ENCODE measurements at regions of chr15 and their contacts with region 1.

Region 1: GRCh38 chr15:72585476-72586082 is 68.9 kb upstream of the GOLGA6B start:
- H3K4me3 Mint-ChIP-seq: no peak overlapping the region
- H3K27ac Mint-ChIP-seq: no peak overlapping the region
- H3K4me1 Mint-ChIP-seq: peaks cover 5% of the 10 kb centered on the region
- H3K27me3 Mint-ChIP-seq: no peaks in the 10 kb centered on the region

Region 2: DNA sequence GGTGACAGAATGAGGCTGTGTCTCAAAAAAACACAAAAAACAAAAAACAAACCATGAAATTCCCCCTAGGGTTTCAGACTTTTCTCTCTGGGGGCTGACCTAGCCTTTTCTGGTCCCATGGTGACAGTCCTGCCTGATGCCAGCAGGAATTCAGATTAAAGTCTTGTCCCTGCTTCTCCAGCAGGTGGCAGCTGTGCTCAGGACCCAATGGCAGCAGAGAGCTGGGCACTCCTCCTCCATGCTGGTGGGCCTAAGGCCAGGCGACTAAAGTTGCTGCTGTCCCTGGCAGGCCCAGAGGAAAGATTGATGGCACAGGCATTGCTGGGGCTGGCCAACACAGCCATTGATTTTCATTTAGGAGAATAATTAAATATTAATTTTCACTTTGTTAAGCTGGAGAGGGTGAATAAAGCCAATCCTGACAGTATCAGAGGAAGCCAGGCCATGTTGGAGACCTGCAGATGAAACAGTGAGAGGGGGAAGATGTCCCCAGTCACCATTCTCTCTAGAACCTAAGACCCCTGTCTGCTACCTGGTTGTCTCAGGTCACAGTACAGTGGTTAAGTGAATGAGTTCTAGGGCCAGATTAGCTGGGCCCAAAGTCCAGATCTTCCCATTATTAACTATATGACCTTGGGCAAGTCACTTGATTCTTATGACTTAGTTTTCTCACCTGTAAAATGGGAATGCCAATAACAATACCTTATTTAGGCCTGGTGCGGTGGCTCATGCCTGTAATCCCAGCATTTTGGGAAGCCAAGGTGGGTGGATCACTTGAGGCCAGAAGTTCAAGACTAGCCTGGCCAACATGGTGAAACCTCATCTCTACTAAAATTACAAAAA is 272.8 kb before region 1 on chr15:
- intact Hi-C with region 1: loop called (anchors 10 kb)
- H3K4me3 Mint-ChIP-seq: no peak overlapping the region
- H3K27ac Mint-ChIP-seq: no peak overlapping the region
- H3K4me1 Mint-ChIP-seq: peaks cover 11% of the 10 kb centered on the region
- H3K27me3 Mint-ChIP-seq: peaks cover 4% of the 10 kb centered on the region